ENCODE measurements at regions of chr19 and their contacts with region 1.

Region 1: GRCh38 chr19:46803555-46803954 is 15.2 kb upstream of the SLC1A5 start:
- DNase-seq: no peak
- H3K4me3 Mint-ChIP-seq: no peak overlapping the region
- H3K27ac Mint-ChIP-seq: no peak overlapping the region
- H3K4me1 Mint-ChIP-seq: no peaks in the 10 kb centered on the region
- H3K27me3 Mint-ChIP-seq: no peaks in the 10 kb centered on the region
- CTCF ChIP-seq: no peak

Region 2: DNA sequence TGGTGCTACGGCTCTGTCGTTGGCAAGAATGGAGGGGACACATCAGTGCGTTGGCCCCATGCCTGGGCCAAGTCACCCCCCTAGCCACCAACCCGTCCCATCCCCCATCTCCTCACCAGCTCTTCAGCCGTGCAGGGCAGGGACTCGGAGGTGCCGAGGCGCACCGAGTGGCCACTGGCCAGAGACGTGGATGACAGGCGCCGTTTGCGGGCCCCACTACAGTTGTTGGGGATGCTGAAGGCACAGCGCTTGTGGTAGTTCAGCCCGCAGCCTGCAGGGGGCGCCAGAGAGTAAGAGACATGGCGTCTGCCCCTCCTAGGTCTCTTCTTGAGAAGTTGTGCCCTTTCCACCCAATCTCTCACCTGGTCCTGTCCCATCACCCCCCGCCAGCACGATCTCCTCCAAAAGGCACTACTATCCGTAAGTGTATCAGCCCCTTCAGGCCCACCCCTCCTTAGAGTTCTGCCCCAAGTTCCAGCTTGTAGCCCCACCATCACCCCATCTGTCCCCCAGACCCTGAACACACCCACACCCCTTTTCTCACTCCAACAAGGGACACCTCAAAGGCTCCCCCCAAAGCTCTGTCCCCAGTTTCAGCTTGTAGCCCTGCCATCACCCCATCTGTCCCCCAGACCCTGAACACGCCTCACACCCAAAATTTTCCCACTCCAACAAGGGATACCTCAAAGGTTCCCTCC is 99.0 kb before region 1 on chr19:
- CTCF ChIA-PET with region 1: no interaction called
- intact Hi-C with region 1: no loop called
- DNase-seq: peak; percentile 50
- H3K4me3 Mint-ChIP-seq: no peak overlapping the region
- H3K27ac Mint-ChIP-seq: no peak overlapping the region
- H3K4me1 Mint-ChIP-seq: no peaks in the 10 kb centered on the region
- H3K27me3 Mint-ChIP-seq: no peaks in the 10 kb centered on the region
- CTCF ChIP-seq: peak; percentile 95

Region 3: DNA sequence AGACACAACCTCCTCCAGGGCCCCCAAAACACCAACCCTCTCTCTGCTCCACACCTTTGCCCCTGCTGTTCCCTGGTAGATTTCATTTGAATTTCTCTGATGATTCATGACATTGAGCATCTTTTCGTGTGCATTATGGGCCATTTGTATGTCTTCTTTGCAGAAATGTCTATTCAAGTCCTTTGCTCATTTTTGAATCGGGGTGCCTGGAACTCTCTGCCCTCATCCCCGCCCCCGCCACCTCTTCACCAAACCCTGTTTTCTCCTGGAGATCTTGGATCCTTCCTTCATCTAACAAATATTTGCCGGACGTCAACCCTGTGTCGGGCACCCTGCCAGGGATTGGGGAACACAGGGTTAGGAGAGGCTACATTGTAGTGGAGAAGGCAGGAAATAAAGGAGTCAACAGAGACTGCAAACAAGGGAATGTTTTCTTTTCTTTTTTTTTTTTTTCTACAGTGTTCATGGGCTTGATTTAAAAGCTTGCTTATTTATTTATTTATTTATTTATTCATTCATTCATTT is 10.3 kb after region 1 on chr19:
- CTCF ChIA-PET with region 1: no interaction called
- intact Hi-C with region 1: no loop called
- DNase-seq: peak; percentile 68
- H3K4me3 Mint-ChIP-seq: no peak overlapping the region
- H3K27ac Mint-ChIP-seq: no peak overlapping the region
- H3K4me1 Mint-ChIP-seq: peaks cover 15% of the 10 kb centered on the region
- H3K27me3 Mint-ChIP-seq: peaks cover 13% of the 10 kb centered on the region
- CTCF ChIP-seq: no peak

Region 4: DNA sequence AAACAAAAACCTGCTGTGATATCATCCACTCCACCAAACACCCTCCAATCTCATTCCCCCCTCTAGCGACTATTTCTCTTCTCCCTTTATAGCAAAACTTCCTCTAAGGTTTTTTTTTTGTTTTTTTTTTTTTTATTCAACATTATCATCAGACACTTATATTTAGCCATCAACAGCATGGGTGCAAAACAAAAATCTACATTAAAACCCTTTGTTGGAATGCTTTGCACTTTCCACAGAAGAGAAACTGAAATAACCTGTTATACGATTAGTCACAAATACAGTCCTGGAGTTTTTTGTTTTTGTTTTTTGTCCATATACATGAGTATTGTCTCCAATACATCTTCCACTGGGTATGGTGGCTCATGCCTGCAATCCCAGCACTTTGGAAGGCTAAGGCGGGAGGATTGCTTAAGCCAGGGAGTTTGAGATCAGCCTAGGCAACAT is 22.0 kb after region 1 on chr19:
- CTCF ChIA-PET with region 1: interaction called, 13 read pairs
- intact Hi-C with region 1: no loop called
- DNase-seq: no peak
- H3K4me3 Mint-ChIP-seq: no peak overlapping the region
- H3K27ac Mint-ChIP-seq: no peak overlapping the region
- H3K4me1 Mint-ChIP-seq: peaks cover 12% of the 10 kb centered on the region
- H3K27me3 Mint-ChIP-seq: no peaks in the 10 kb centered on the region
- CTCF ChIP-seq: no peak